ENCODE measurements at regions of chr19 and their contacts with region 1.

Region 1: DNA sequence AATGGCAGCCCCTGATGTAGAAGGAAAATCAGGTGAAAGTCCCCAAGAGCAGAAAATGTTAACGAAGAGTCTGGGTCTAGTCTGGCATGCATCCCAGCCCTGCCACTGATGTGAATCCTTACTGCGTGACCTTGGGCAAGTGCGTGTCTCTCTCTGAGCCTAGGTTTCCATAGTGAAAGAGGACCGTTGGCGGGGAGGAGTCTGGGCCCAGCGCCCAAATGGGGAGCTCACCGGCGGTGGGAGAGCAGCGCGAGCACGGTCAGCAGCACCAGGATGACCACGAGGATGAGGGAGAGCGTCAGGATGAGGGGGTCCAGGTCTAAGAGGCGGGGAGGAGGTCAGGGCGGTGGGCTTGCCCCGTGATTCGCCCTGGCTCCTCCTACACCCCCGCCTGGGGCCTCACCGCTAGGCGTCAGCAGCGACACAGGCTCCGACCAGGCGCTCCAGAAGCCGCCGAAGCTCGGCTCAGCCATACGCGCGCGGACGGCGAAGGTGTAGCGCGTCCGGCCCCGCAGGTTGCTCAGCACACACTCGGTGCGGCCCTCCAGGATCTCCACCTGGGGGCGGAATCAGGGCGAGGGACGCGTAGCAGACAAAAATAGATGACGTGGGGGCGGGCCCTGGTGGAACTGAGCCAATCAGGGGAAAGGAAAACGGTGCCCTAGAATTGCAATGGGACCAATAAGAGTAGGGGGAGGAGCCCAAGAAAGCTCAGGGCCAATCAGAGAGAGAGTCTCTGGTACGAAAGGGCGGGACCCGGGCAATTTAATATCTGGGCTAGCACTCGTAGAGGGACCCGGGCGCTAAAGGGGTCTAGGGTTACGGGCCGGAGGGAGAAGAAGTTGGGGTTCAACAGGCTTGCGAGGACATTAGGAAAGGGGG is 3.2 kb downstream of the EPOR start:
- DNase-seq: peak; percentile 94 to 98
- ATAC-seq: peak; percentile 81 to 92 (median 83)
- H3K4me3 ChIP-seq: peak overlapping the region; percentile 63
- H3K4me3 Mint-ChIP-seq: peak overlapping the region; percentile 98
- H3K27ac ChIP-seq: peak overlapping the region; percentile 90
- H3K27ac Mint-ChIP-seq: peak overlapping the region; percentile 92 to 97
- H3K4me1 ChIP-seq: peaks cover 56% of the 10 kb centered on the region
- H3K4me1 Mint-ChIP-seq: peaks cover 29 to 37% of the 10 kb centered on the region in 2 donors
- H3K27me3 ChIP-seq: peaks cover 14% of the 10 kb centered on the region
- H3K27me3 Mint-ChIP-seq: peaks cover 0 to 22% of the 10 kb centered on the region in 2 donors
- CTCF ChIP-seq: peak; percentile 71

Region 2: GRCh38 chr19:11293433-11294389 is 87.2 kb before region 1 on chr19:
- intact Hi-C with region 1: loop called (anchors 1 kb)
- DNase-seq: peak; percentile 77 to 81
- ATAC-seq: peak; percentile 94 to 100 (median 99)
- H3K4me3 ChIP-seq: no peak overlapping the region
- H3K4me3 Mint-ChIP-seq: no peak overlapping the region
- H3K27ac ChIP-seq: no peak overlapping the region
- H3K27ac Mint-ChIP-seq: no peak overlapping the region
- H3K4me1 ChIP-seq: peaks cover 10% of the 10 kb centered on the region
- H3K4me1 Mint-ChIP-seq: peaks cover 0 to 10% of the 10 kb centered on the region in 2 donors
- H3K27me3 ChIP-seq: no peaks in the 10 kb centered on the region
- H3K27me3 Mint-ChIP-seq: peaks cover 8 to 11% of the 10 kb centered on the region in 2 donors
- CTCF ChIP-seq: peak; percentile 90

Region 3: GRCh38 chr19:11346092-11346940 is 34.6 kb before region 1 on chr19 and contains the starts of genes CCDC159 and TMEM205:
- intact Hi-C with region 1: loop called (anchors 1 kb)
- DNase-seq: peak; percentile 97 to 98
- ATAC-seq: peak; percentile 92 to 98 (median 93)
- H3K4me3 ChIP-seq: peak within 1 kb of the TSS; percentile 96
- H3K4me3 Mint-ChIP-seq: peak within 1 kb of the TSS; percentile 99
- H3K27ac ChIP-seq: peak within 1 kb of the TSS; percentile 91
- H3K27ac Mint-ChIP-seq: peak within 1 kb of the TSS; percentile 98
- H3K4me1 ChIP-seq: peaks cover 21% of the 10 kb centered on the region
- H3K4me1 Mint-ChIP-seq: peaks cover 18 to 32% of the 10 kb centered on the region in 2 donors
- H3K27me3 ChIP-seq: no peaks in the 10 kb centered on the region
- H3K27me3 Mint-ChIP-seq: no peaks in the 10 kb centered on the region
- CTCF ChIP-seq: no peak
- total RNA-seq, gene CCDC159: 86.9 to 94.9 (median 91.8) TPM
- total RNA-seq, gene TMEM205: 25.0 to 29.9 (median 29.5) TPM

Region 4: DNA sequence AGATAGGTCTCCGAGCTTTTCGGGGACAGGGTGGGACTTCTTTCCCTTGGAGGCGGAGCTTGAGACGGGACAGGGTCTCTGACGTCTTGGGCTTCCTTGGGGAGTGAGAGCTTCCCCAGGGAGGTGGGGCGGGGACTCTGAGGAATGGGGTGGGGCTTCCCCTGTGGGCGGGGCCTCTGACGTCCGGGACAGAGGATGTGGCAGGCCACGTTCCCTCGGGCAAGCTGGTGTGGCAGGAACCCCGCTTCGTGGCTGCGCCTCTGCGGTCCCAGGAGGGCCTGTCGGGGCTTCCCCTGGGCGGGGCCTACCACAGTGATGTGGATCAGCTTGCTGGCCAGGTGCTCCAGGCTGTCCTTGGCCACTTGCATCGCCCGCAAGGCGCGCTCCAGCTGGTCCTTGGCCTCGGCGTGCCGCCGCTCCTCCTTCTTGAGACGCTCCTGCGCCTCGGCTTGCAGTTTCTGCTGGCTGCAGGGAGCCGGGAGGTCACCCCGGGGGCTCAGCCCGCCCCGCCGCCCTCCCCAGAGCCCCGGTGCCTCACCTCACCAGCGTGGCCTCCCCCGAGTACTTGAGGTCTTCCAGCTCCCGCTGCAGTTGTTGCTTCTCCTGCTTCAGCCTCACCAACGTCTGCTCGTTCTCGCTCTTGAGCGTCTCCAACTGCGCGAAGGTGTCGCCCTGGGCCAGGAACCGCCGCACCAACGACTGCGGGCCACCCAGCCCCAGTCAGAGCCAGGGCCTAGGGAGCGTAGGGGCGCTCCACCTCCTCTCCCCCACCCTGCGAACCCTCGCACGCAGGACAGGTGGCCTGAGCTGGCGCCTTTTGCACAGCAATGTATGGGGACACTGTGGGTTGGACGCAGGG is 41.5 kb after region 1 on chr19:
- intact Hi-C with region 1: loop called (anchors 5 kb)
- DNase-seq: peak; percentile 63 to 78
- ATAC-seq: peak; percentile 65 to 81 (median 76)
- H3K4me3 ChIP-seq: peak overlapping the region; percentile 26
- H3K4me3 Mint-ChIP-seq: peak overlapping the region; percentile 86
- H3K27ac ChIP-seq: no peak overlapping the region
- H3K27ac Mint-ChIP-seq: peak overlapping the region in 1 of 2 donors; percentile 63
- H3K4me1 ChIP-seq: peaks cover 50% of the 10 kb centered on the region
- H3K4me1 Mint-ChIP-seq: peaks cover 30 to 46% of the 10 kb centered on the region in 2 donors
- H3K27me3 ChIP-seq: peaks cover 49% of the 10 kb centered on the region
- H3K27me3 Mint-ChIP-seq: peaks cover 21 to 47% of the 10 kb centered on the region in 2 donors
- CTCF ChIP-seq: no peak

Region 5: GRCh38 chr19:11435058-11435832 is 54.4 kb after region 1 on chr19 and contains the starts of genes ODAD3 and PRKCSH:
- intact Hi-C with region 1: loop called (anchors 1 kb)
- DNase-seq: peak; percentile 94 to 99
- ATAC-seq: peak; percentile 93 to 98 (median 93)
- H3K4me3 ChIP-seq: peak within 1 kb of the TSS; percentile 84
- H3K4me3 Mint-ChIP-seq: peak within 1 kb of the TSS; percentile 99
- H3K27ac ChIP-seq: peak within 1 kb of the TSS; percentile 75
- H3K27ac Mint-ChIP-seq: peak within 1 kb of the TSS; percentile 97 to 99
- H3K4me1 ChIP-seq: peaks cover 26% of the 10 kb centered on the region
- H3K4me1 Mint-ChIP-seq: peaks cover 21 to 29% of the 10 kb centered on the region in 2 donors
- H3K27me3 ChIP-seq: no peaks in the 10 kb centered on the region
- H3K27me3 Mint-ChIP-seq: no peaks in the 10 kb centered on the region
- CTCF ChIP-seq: peak; percentile 84
- total RNA-seq, gene ODAD3: not detected
- total RNA-seq, gene PRKCSH: 320 to 367 (median 327) TPM

Region 6: GRCh38 chr19:11482384-11483050 is 101.6 kb after region 1 on chr19:
- intact Hi-C with region 1: loop called (anchors 1 kb)
- DNase-seq: peak; percentile 91 to 95
- ATAC-seq: peak; percentile 87 to 95 (median 91)
- H3K4me3 ChIP-seq: peak overlapping the region; percentile 5
- H3K4me3 Mint-ChIP-seq: peak overlapping the region; percentile 77
- H3K27ac ChIP-seq: no peak overlapping the region
- H3K27ac Mint-ChIP-seq: peak overlapping the region; percentile 31 to 89
- H3K4me1 ChIP-seq: peaks cover 33% of the 10 kb centered on the region
- H3K4me1 Mint-ChIP-seq: peaks cover 15 to 30% of the 10 kb centered on the region in 2 donors
- H3K27me3 ChIP-seq: peaks cover 24% of the 10 kb centered on the region
- H3K27me3 Mint-ChIP-seq: peaks cover 24 to 27% of the 10 kb centered on the region in 2 donors
- CTCF ChIP-seq: peak; percentile 90